K562 (cell line): ENCODE measurements at regions of chr10 and their contacts with region 1.

Region 1: DNA sequence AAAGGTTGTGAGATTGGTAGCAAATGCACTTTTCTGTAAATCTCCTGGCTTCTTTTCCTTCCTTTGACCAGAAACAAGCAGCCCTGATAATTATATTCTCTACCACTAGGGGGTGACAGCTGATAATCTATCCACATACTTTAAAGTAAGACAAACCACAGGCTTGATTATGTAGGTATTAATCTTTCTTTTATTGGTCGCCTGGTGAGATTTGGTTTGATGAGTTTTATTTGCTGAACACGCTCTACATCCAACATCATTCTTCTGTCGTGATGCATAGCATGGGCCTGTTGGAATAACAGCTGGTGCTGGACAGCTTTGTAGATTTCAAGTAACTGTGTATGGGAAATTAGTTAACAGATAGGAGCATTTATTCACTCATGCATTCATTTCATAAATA is 63.5 kb downstream of the ZNF365 start:
- DNase-seq: peak; percentile 48 to 69 (median 62)
- ATAC-seq: peak; percentile 87
- H3K4me3 ChIP-seq: no peak overlapping the region
- H3K27ac ChIP-seq: no peak overlapping the region
- H3K4me1 ChIP-seq: no peaks in the 10 kb centered on the region
- H3K27me3 ChIP-seq: no peaks in the 10 kb centered on the region
- CTCF ChIP-seq: peak; percentile 54 to 83 (median 73); a peak in 5 of 6 replicates
- EP300 ChIP-seq: no peak
- POLR2A ChIP-seq: no peak
- RAD21 ChIP-seq: peak; percentile 75 to 81

Region 2: GRCh38 chr10:62816331-62817120 is 378.8 kb after region 1 on chr10 and contains the start of gene EGR2:
- CTCF ChIA-PET with region 1: interaction called, 3 read pairs
- POLR2A ChIA-PET with region 1: no interaction called
- in situ Hi-C with region 1: no loop called
- intact Hi-C with region 1: loop called (anchors 5 kb)
- DNase-seq: peak; percentile 80 to 94 (median 88)
- ATAC-seq: peak; percentile 92
- H3K4me3 ChIP-seq: peak within 1 kb of the TSS; percentile 74
- H3K27ac ChIP-seq: peak within 1 kb of the TSS; percentile 70
- H3K4me1 ChIP-seq: peaks cover 7 to 50% of the 10 kb centered on the region in 2 experiments; a peak in 3 of 5 replicates
- H3K27me3 ChIP-seq: peaks cover 19 to 53% of the 10 kb centered on the region in 2 experiments; a peak in 4 of 5 replicates
- CTCF ChIP-seq: no peak
- EP300 ChIP-seq: no peak
- POLR2A ChIP-seq: peak; percentile 64
- RAD21 ChIP-seq: no peak
- polyA plus RNA-seq, gene EGR2: not detected

Region 3: DNA sequence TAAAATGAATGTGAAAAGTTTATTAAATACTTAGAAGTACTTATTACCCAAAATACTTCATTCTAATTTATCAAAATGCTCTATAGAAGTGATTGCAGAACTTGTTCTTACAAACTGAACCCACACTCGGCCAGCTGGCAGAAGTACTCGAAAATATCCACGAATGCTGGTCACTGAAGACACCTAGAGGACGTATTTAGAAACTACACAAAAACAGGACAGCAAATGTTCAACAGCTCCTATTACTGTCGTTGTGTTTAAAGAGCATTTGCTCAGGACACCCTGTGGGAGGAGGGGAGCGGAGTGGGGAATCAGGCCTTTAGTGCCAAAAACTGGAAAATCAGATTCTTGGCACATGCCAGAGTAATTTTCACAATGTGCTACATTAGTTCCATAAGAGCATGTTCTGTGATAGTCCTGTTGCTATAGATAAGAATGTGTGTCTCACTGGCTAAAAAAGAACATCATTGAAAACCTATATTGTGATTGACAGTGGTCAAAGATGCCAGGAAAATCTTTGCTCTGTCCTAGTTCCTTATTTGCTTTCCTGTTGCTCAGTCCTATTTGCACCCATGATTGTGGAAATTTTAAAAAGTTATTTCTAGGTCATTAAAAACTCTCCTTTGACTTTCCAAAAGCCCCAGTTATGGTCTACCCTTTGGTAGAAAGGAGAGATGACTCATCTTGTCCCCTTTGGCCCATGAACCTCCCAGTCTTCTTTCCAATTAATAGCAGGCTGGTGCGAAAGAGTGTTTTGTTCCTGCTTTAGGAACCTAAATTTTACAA is 646.4 kb after region 1 on chr10:
- CTCF ChIA-PET with region 1: interaction called, 7 read pairs
- POLR2A ChIA-PET with region 1: no interaction called
- in situ Hi-C with region 1: no loop called
- intact Hi-C with region 1: loop called (anchors 5 kb)
- DNase-seq: peak; percentile 40 to 73 (median 42)
- ATAC-seq: peak; percentile 96
- H3K4me3 ChIP-seq: no peak overlapping the region
- H3K27ac ChIP-seq: no peak overlapping the region
- H3K4me1 ChIP-seq: no peaks in the 10 kb centered on the region
- H3K27me3 ChIP-seq: 0 out of 5 replicates have a peak, but pooled peaks cover 0 to 5% of the 10 kb centered on the region in 2 experiments
- CTCF ChIP-seq: peak; percentile 68 to 91 (median 76)
- EP300 ChIP-seq: no peak
- POLR2A ChIP-seq: no peak
- RAD21 ChIP-seq: peak; percentile 90

Region 4: GRCh38 chr10:63720072-63720537 is 1282.4 kb after region 1 on chr10:
- CTCF ChIA-PET with region 1: no interaction called
- POLR2A ChIA-PET with region 1: no interaction called
- in situ Hi-C with region 1: loop called (anchors 25 kb)
- intact Hi-C with region 1: loop called (anchors 1 kb)
- DNase-seq: peak; percentile 46 to 66 (median 61)
- ATAC-seq: peak; percentile 56
- H3K4me3 ChIP-seq: no peak overlapping the region
- H3K27ac ChIP-seq: no peak overlapping the region
- H3K4me1 ChIP-seq: no peaks in the 10 kb centered on the region
- H3K27me3 ChIP-seq: peaks cover 20 to 40% of the 10 kb centered on the region in 2 experiments
- CTCF ChIP-seq: peak; percentile 82 to 98 (median 83)
- EP300 ChIP-seq: no peak
- POLR2A ChIP-seq: no peak
- RAD21 ChIP-seq: peak; percentile 96

Region 5: GRCh38 chr10:63738410-63738809 is 1300.7 kb after region 1 on chr10:
- CTCF ChIA-PET with region 1: no interaction called
- POLR2A ChIA-PET with region 1: no interaction called
- in situ Hi-C with region 1: loop called (anchors 25 kb)
- intact Hi-C with region 1: no loop called
- DNase-seq: no peak
- ATAC-seq: no peak; the same call in 2 of the 3 replicates
- H3K4me3 ChIP-seq: no peak overlapping the region
- H3K27ac ChIP-seq: no peak overlapping the region
- H3K4me1 ChIP-seq: no peaks in the 10 kb centered on the region
- H3K27me3 ChIP-seq: peaks cover 4% of the 10 kb centered on the region in 2 experiments; a peak in 4 of 5 replicates
- CTCF ChIP-seq: no peak
- EP300 ChIP-seq: no peak
- POLR2A ChIP-seq: no peak
- RAD21 ChIP-seq: no peak